ENCODE measurements at regions of chr21 and their contacts with region 1.

Region 1: DNA sequence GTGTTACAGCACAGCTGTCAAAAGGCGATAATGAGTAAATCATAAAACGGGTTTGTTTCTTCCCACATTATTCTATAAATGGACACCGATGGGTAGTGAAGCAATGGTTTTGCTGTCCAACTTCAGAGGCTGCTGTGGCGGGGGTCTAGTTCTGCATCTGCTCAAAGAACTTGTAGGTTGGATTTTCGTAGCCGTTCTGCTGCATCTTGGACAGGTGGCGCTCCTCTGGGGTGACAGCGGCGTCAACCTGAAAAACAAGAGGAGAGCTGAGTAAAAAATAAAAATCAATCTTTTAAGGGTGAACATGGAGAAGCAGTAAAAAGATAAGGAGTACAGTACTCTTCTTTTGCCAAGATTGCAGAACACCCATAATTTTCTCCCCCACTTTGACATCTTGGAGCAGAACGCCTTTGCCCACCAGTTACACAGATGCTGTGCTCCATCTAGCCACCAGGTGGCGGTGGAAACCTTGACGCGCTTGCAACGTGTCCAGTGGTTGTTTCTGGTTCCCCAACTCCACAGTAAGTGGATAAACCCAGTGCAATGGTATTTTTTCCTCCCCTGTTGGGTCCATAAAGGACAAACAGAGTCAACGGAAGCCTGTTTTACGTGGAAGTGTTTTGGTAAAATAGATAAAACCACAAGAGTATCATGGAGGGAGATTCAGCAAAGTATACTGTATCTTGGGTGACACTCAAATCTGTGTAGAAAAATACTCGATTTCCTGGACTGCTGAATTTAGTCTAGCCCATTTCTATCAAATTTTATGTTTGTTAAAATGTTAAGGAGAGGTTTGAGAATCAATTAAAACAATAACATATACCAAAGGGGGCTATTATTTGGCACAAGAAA is 147.0 kb downstream of the GABPA start:
- DNase-seq: peak; percentile 47 to 83 (median 65)
- ATAC-seq: peak; percentile 93
- H3K4me3 ChIP-seq: no peak overlapping the region
- H3K27ac ChIP-seq: no peak overlapping the region
- H3K4me1 ChIP-seq: no peaks in the 10 kb centered on the region
- H3K27me3 ChIP-seq: no peaks in the 10 kb centered on the region
- CTCF ChIP-seq: peak; percentile 91

Region 2: DNA sequence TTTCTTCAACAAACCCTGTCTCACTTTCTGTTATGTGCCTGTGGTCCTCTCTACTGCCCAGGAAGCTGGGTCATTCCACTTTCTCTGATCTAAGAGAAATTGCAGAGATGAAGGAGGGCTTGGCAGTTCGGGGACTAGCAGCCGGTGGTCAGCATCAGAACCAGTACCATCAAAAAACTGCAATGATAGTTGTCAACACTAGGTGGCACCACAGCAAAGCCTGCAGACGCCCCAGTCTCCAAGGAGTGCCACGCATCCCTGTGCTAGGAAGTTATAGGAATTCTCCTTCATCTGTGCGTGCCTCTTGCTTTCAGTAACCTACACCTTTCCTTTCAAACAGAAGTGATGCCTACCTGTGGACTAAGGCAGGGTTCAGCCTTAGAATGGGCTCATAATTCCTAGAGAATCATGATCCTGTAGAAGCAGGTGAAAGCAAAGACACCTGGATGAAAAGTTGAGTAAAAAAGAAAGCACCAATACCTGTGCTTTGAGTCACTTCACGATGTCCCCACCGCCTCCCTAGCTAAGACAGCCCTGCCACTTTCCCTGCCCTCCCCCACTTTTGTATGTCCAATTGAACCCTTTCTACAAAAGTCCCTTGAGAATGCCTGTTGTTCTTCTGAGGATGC is 834.2 kb after region 1 on chr21:
- intact Hi-C with region 1: loop called in 1 of 2 experiments (anchors 5 kb)
- DNase-seq: peak in 1 of 4 donors; percentile 58
- ATAC-seq: peak; percentile 95
- H3K4me3 ChIP-seq: no peak overlapping the region
- H3K27ac ChIP-seq: no peak overlapping the region
- H3K4me1 ChIP-seq: no peaks in the 10 kb centered on the region
- H3K27me3 ChIP-seq: no peaks in the 10 kb centered on the region
- CTCF ChIP-seq: peak; percentile 53 to 60